WTC11 (cell line): ENCODE measurements at regions of chr4 and their contacts with region 1.

Region 1: GRCh38 chr4:24988776-24989175 is 42.0 kb downstream of the LGI2 start:
- DNase-seq: peak; percentile 58
- ATAC-seq: peak; percentile 94
- H3K4me3 Mint-ChIP-seq: peak overlapping the region; percentile 25
- H3K27ac Mint-ChIP-seq: peak overlapping the region; percentile 55
- H3K4me1 Mint-ChIP-seq: peaks cover 21% of the 10 kb centered on the region
- H3K27me3 Mint-ChIP-seq: peaks cover 15% of the 10 kb centered on the region
- CTCF ChIP-seq: peak; percentile 39; the same call in 1 of the 2 replicates

Region 2: DNA sequence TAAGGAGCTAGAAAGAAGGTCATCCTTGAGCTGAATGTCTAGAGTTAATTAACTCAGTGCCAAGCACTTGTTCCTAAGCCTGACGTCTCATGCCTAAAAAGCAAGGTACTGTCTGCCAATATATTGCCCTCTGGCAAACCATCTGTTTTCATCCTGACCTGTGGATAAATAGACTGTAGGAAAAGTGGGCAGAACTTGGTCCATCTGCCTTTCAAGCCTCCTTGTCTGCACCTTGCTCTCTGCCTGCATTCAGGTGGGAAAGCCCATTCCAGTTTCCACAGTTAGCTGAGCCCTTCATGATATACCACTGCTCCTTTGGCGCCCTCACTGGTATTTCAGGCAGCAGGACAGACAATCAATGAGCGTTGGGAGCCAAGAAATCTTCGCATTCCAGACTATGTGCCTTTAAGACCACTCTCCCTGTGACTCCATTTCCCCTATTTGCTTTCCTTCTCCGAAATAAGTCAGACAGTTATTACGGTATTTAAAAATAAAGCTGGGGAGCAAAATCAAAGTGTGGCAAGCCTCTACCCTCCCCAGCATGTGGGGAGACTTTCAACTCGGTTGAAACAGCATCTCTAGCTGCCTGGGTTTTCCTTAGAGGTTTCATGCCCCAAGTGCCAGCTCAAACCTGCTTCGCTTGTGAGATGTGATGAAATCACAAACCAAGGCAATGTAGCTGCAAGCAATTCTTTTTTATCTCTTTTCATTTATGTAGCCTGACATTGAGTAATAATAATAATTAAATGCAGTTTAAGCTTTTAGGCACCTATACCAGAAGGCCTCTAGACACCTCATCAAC is 73.5 kb before region 1 on chr4:
- CTCF ChIA-PET with region 1: interaction called, 10 read pairs
- POLR2A ChIA-PET with region 1: no interaction called
- DNase-seq: peak; percentile 18
- ATAC-seq: peak; percentile 5
- H3K4me3 Mint-ChIP-seq: no peak overlapping the region
- H3K27ac Mint-ChIP-seq: no peak overlapping the region
- H3K4me1 Mint-ChIP-seq: peaks cover 27% of the 10 kb centered on the region
- H3K27me3 Mint-ChIP-seq: peaks cover 40% of the 10 kb centered on the region
- CTCF ChIP-seq: no peak